ENCODE measurements at regions of chr4 and their contacts with region 1.

Region 1: GRCh38 chr4:102430461-102430910 is 70.7 kb upstream of the NFKB1 start:
- DNase-seq: peak in 1 of 35 experiments; percentile 14
- ATAC-seq: no peak
- H3K4me3 ChIP-seq: peak overlapping the region; percentile 61 to 72
- H3K4me3 Mint-ChIP-seq: peak overlapping the region; percentile 87 to 92 (median 89)
- H3K27ac ChIP-seq: peak overlapping the region; percentile 28
- H3K27ac Mint-ChIP-seq: peak overlapping the region in 1 of 2 donors; percentile 80
- H3K4me1 ChIP-seq: no peaks in the 10 kb centered on the region
- H3K4me1 Mint-ChIP-seq: peaks cover 0 to 7% (median 5%) of the 10 kb centered on the region in 3 donors
- H3K27me3 ChIP-seq: no peaks in the 10 kb centered on the region
- H3K27me3 Mint-ChIP-seq: no peaks in the 10 kb centered on the region

Region 2: DNA sequence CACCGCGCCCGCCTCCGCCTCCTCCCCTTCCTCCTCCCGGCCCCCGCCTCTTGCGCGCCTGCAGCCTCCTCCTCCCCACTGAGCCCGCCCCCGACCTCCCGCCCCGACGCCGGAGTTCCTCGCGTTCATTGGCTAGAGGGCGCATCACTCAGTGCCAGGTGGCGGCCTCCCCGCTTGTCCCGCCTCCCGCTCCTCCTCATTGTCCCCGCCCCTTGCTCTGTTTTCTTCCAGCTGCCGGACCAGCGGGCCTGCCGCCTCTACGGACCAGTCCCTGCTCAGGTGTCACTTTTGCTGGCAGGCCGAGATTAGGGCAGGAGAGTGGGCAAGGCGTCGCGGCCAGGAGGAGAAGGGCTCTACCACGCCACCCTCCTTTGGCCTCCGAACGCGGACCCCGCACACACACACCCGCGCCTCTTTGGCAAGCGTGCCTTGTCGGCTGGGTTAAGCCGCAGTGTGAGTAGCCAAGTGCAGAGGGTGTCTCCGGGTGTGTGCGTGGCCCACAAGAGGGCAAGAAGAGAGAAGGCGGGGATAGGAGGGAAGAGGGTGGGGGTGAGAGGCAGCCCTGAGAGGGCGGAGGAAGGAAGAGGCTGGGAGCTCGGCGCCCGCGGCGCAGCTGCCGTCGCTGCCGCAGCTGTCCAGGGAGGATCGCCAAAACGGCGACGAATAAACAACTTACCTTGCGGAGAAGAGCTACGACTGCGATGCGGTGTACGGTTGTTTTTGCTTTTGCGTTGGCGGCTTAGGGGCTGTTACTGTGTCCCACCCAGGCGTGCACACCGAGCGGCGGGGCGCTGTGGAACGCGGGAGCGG is 1082.7 kb before region 1 on chr4:
- CTCF ChIA-PET with region 1: interaction called in 1 of 2 experiments, 12 read pairs
- POLR2A ChIA-PET with region 1: interaction called in 1 of 2 experiments, 3 read pairs
- DNase-seq: peak; percentile 95 to 100 (median 98)
- ATAC-seq: peak; percentile 83 to 89 (median 84)
- H3K4me3 ChIP-seq: peak overlapping the region; percentile 62 to 95
- H3K4me3 Mint-ChIP-seq: peak overlapping the region; percentile 92 to 98 (median 95)
- H3K27ac ChIP-seq: peak overlapping the region; percentile 80
- H3K27ac Mint-ChIP-seq: peak overlapping the region; percentile 89 to 96
- H3K4me1 ChIP-seq: peaks cover 6 to 17% of the 10 kb centered on the region in 2 experiments
- H3K4me1 Mint-ChIP-seq: peaks cover 31 to 43% (median 39%) of the 10 kb centered on the region in 3 donors
- H3K27me3 ChIP-seq: peaks cover 0 to 8% of the 10 kb centered on the region in 2 experiments
- H3K27me3 Mint-ChIP-seq: peaks cover 5 to 18% of the 10 kb centered on the region in 2 donors

Region 3: GRCh38 chr4:102449751-102450352 is 19.4 kb after region 1 on chr4:
- CTCF ChIA-PET with region 1: interaction called, 6 to 14 read pairs
- POLR2A ChIA-PET with region 1: interaction called in 1 of 2 experiments, 6 read pairs
- DNase-seq: peak in 34 of 35 experiments; percentile 5 to 83 (median 44)
- ATAC-seq: peak; percentile 66 to 85 (median 76)
- H3K4me3 ChIP-seq: no peak overlapping the region
- H3K4me3 Mint-ChIP-seq: no peak overlapping the region
- H3K27ac ChIP-seq: no peak overlapping the region
- H3K27ac Mint-ChIP-seq: no peak overlapping the region
- H3K4me1 ChIP-seq: peaks cover 3% of the 10 kb centered on the region in 2 experiments
- H3K4me1 Mint-ChIP-seq: peaks cover 9 to 17% (median 16%) of the 10 kb centered on the region in 3 donors
- H3K27me3 ChIP-seq: no peaks in the 10 kb centered on the region
- H3K27me3 Mint-ChIP-seq: peaks cover 0 to 1% of the 10 kb centered on the region in 2 donors

Region 4: DNA sequence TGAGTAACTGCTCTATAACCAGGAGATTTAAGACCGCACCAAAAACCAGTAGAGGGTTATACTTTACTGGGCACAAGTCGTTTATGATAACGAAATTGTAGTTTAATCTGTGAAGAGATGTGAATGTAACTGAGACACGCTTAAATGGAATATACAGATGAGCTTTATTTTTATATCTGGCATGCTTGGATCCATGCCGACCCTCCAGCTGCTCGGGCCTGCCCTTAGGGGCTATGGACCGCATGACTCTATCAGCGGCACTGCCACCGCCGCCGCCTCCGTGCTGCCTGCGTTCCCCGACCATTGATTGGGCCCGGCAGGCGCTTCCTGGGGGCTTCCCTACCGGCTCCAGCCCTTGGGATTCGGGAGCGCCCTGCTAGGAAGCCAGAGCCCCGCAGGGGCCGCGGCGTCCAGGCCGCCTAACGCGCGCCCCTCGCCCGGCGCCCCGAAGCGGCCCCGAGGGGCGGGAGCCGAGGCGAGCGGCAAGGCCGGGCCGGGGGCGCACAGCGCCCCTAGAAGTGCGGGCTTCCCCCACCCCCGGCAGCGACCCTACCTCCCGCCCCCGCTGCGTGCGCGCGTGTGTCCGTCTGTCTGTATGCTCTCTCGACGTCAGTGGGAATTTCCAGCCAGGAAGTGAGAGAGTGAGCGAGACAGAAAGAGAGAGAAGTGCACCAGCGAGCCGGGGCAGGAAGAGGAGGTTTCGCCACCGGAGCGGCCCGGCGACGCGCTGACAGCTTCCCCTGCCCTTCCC is 70.4 kb after region 1 on chr4 and contains the start of gene NFKB1:
- CTCF ChIA-PET with region 1: interaction called, 8 to 17 read pairs
- POLR2A ChIA-PET with region 1: interaction called in 1 of 2 experiments, 4 read pairs
- DNase-seq: peak; percentile 41 to 94 (median 84)
- ATAC-seq: peak; percentile 62 to 79 (median 66)
- H3K4me3 ChIP-seq: peak within 1 kb of the TSS; percentile 99
- H3K4me3 Mint-ChIP-seq: peak within 1 kb of the TSS; percentile 91 to 98 (median 96)
- H3K27ac ChIP-seq: peak within 1 kb of the TSS; percentile 100
- H3K27ac Mint-ChIP-seq: peak within 1 kb of the TSS; percentile 95 to 98
- H3K4me1 ChIP-seq: peaks cover 13 to 27% of the 10 kb centered on the region in 2 experiments
- H3K4me1 Mint-ChIP-seq: peaks cover 25 to 30% (median 30%) of the 10 kb centered on the region in 3 donors
- H3K27me3 ChIP-seq: no peaks in the 10 kb centered on the region
- H3K27me3 Mint-ChIP-seq: no peaks in the 10 kb centered on the region
- total RNA-seq, gene NFKB1: 83.0 to 185 (median 92.1) TPM

Region 5: GRCh38 chr4:102531462-102531861 is 101.0 kb after region 1 on chr4:
- CTCF ChIA-PET with region 1: no interaction called
- POLR2A ChIA-PET with region 1: no interaction called
- DNase-seq: no peak
- ATAC-seq: no peak
- H3K4me3 ChIP-seq: no peak overlapping the region
- H3K4me3 Mint-ChIP-seq: no peak overlapping the region
- H3K27ac ChIP-seq: no peak overlapping the region
- H3K27ac Mint-ChIP-seq: no peak overlapping the region
- H3K4me1 ChIP-seq: peaks cover 7 to 20% of the 10 kb centered on the region in 2 experiments
- H3K4me1 Mint-ChIP-seq: peaks cover 86% of the 10 kb centered on the region in 3 donors
- H3K27me3 ChIP-seq: no peaks in the 10 kb centered on the region
- H3K27me3 Mint-ChIP-seq: no peaks in the 10 kb centered on the region

Region 6: GRCh38 chr4:102610007-102610406 is 179.5 kb after region 1 on chr4:
- CTCF ChIA-PET with region 1: interaction called in 1 of 2 experiments, 12 read pairs
- POLR2A ChIA-PET with region 1: no interaction called
- DNase-seq: no peak
- ATAC-seq: no peak
- H3K4me3 ChIP-seq: no peak overlapping the region
- H3K4me3 Mint-ChIP-seq: peak overlapping the region in 1 of 3 donors; percentile 28
- H3K27ac ChIP-seq: no peak overlapping the region
- H3K27ac Mint-ChIP-seq: peak overlapping the region; percentile 98 to 99
- H3K4me1 ChIP-seq: peaks cover 37 to 42% of the 10 kb centered on the region in 2 experiments
- H3K4me1 Mint-ChIP-seq: peaks cover 72 to 89% (median 82%) of the 10 kb centered on the region in 3 donors
- H3K27me3 ChIP-seq: no peaks in the 10 kb centered on the region
- H3K27me3 Mint-ChIP-seq: no peaks in the 10 kb centered on the region

Region 7: DNA sequence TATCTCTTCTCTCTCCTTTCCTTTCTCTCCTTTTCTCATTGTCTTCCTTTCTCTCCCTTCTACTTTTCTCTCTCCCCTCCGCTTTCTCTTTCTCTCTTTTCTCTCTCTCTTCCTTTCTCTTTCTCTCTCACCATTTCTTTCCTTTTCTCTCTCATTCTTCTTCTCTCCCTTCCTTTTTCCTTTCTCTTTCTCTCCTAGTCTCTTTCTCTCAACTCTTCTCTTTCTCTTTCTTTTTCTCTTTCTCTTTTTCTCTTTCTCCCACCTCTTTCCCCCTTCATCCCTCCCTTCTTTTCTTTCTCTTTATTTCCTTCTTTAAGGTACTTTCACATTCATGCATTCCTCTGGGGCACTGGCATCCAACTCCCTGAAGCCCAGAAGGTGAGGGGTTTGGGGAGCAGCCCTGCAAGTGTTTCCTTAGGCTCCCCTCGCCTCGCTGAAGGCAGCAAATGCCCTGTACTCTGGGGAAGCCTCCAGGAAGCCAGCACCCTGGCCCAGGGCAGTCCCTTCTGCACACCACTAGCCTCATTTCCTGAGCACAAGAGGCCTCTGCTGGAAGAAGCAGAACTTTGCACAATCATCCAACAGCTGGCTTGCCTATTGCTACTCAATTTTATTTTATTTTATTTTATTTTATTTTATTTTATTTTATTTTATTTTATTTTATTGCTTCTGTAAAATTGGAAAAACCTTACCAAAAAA is 194.9 kb after region 1 on chr4:
- CTCF ChIA-PET with region 1: interaction called in 1 of 2 experiments, 16 read pairs
- POLR2A ChIA-PET with region 1: interaction called in 1 of 2 experiments, 5 read pairs
- DNase-seq: peak; percentile 38 to 80 (median 63)
- ATAC-seq: peak; percentile 82 to 89 (median 85)
- H3K4me3 ChIP-seq: no peak overlapping the region
- H3K4me3 Mint-ChIP-seq: peak overlapping the region; percentile 39 to 68 (median 40)
- H3K27ac ChIP-seq: peak overlapping the region; percentile 41
- H3K27ac Mint-ChIP-seq: peak overlapping the region; percentile 83 to 89
- H3K4me1 ChIP-seq: peaks cover 14 to 18% of the 10 kb centered on the region in 2 experiments
- H3K4me1 Mint-ChIP-seq: peaks cover 65 to 73% (median 73%) of the 10 kb centered on the region in 3 donors
- H3K27me3 ChIP-seq: no peaks in the 10 kb centered on the region
- H3K27me3 Mint-ChIP-seq: no peaks in the 10 kb centered on the region

Region 8: GRCh38 chr4:103193457-103193856 is 763.0 kb after region 1 on chr4:
- CTCF ChIA-PET with region 1: no interaction called
- POLR2A ChIA-PET with region 1: interaction called in 1 of 2 experiments, 12 read pairs
- DNase-seq: no peak
- ATAC-seq: no peak
- H3K4me3 ChIP-seq: no peak overlapping the region
- H3K4me3 Mint-ChIP-seq: no peak overlapping the region
- H3K27ac ChIP-seq: no peak overlapping the region
- H3K27ac Mint-ChIP-seq: no peak overlapping the region
- H3K4me1 ChIP-seq: peaks cover 3 to 9% of the 10 kb centered on the region in 2 experiments
- H3K4me1 Mint-ChIP-seq: peaks cover 9 to 11% (median 10%) of the 10 kb centered on the region in 3 donors
- H3K27me3 ChIP-seq: no peaks in the 10 kb centered on the region
- H3K27me3 Mint-ChIP-seq: no peaks in the 10 kb centered on the region

Measured in T-cell (primary cell).